Pancreas (tissue), 10 donors: ENCODE measurements at regions of chr19 and their contacts with region 1.

Region 1: GRCh38 chr19:32971715-32972540 is at the starts of genes CEP89 and FAAP24:
- DNase-seq: peak; percentile 95 to 100 (median 98)
- ATAC-seq: peak; percentile 98 to 99 (median 98)
- H3K4me3 ChIP-seq: peak within 1 kb of the TSS; percentile 54 to 78 (median 64)
- H3K27ac ChIP-seq: peak within 1 kb of the TSS in 1 of 4 donors; percentile 40
- H3K4me1 ChIP-seq: peaks cover 0 to 12% (median 0%) of the 10 kb centered on the region in 3 donors
- H3K27me3 ChIP-seq: no peaks in the 10 kb centered on the region
- CTCF ChIP-seq: no peak
- total RNA-seq, gene CEP89: 5.7 to 11.0 (median 6.8) TPM
- total RNA-seq, gene FAAP24: 0.37 to 1.0 (median 0.54) TPM

Region 2: GRCh38 chr19:33064792-33065550 is 93.0 kb after region 1 on chr19 and contains the start of gene RHPN2:
- intact Hi-C with region 1: no loop called
- DNase-seq: peak; percentile 57 to 86 (median 70)
- ATAC-seq: peak; percentile 89 to 94 (median 92)
- H3K4me3 ChIP-seq: peak within 1 kb of the TSS; percentile 51 to 74 (median 57)
- H3K27ac ChIP-seq: peak within 1 kb of the TSS; percentile 38 to 74 (median 55)
- H3K4me1 ChIP-seq: no peaks in the 10 kb centered on the region
- H3K27me3 ChIP-seq: no peaks in the 10 kb centered on the region
- CTCF ChIP-seq: no peak
- total RNA-seq, gene RHPN2: 7.6 to 18.9 (median 8.2) TPM

Region 3: DNA sequence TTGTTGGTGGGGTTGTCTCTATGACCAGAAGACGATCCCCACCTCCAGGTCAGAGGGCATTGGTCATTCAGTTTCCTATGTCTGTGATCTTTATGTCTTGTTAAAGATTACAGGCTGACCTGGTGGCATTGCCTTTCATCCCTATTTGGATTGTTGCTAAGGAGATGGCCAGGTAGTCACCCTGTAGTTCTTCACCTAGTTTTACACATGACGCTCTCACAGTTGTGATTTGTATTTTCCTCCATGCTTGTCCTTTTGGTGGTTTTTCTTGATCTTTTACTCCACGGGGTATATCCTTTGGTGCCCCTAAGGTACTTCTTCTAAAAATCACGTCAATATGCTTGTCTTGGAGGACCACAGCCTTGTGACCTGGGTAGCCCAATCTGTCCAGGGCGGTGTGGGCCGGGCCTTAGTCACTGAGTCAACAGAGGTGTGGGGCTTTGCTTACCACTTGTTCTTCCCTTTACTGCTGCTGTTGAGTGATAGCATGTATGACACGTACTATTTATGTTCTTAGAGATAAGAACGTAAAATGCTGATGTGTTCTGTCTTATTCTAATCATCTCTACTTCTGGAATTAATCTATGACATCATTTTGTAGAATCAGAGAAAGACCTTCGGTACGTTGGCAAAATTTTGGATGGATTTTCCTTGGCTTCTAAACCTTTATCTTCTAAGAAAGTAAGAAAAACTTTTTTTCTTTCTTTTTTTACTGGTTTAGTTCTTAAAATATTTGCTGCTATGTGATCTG is 129.1 kb after region 1 on chr19:
- intact Hi-C with region 1: loop called in 1 of 3 experiments (anchors 10 kb)
- DNase-seq: no peak
- ATAC-seq: peak in 1 of 4 donors; percentile 64
- H3K4me3 ChIP-seq: no peak overlapping the region
- H3K27ac ChIP-seq: no peak overlapping the region
- H3K4me1 ChIP-seq: no peaks in the 10 kb centered on the region
- H3K27me3 ChIP-seq: no peaks in the 10 kb centered on the region
- CTCF ChIP-seq: no peak

Region 4: GRCh38 chr19:33186431-33187182 is 214.7 kb after region 1 on chr19:
- intact Hi-C with region 1: no loop called
- DNase-seq: no peak
- ATAC-seq: peak in 1 of 4 donors; percentile 10
- H3K4me3 ChIP-seq: no peak overlapping the region
- H3K27ac ChIP-seq: no peak overlapping the region
- H3K4me1 ChIP-seq: no peaks in the 10 kb centered on the region
- H3K27me3 ChIP-seq: no peaks in the 10 kb centered on the region
- CTCF ChIP-seq: no peak